Body of pancreas (tissue), 4 donors: ENCODE measurements at regions of chr17 and their contacts with region 1.

Region 1: GRCh38 chr17:43483674-43484372 is at the start of gene DHX8:
- DNase-seq: peak; percentile 97 to 99 (median 98)
- ATAC-seq: peak; percentile 100
- H3K4me3 ChIP-seq: peak within 1 kb of the TSS; percentile 38 to 58
- H3K27ac ChIP-seq: peak within 1 kb of the TSS; percentile 35 to 83 (median 67)
- H3K4me1 ChIP-seq: peaks cover 22% of the 10 kb centered on the region
- H3K27me3 ChIP-seq: no peaks in the 10 kb centered on the region
- CTCF ChIP-seq: peak; percentile 100
- POLR2A ChIP-seq: peak; percentile 39 to 92 (median 88)
- total RNA-seq, gene DHX8: 12.2 to 19.4 TPM

Region 2: GRCh38 chr17:43309505-43310332 is 174.1 kb before region 1 on chr17:
- intact Hi-C with region 1: no loop called
- DNase-seq: no peak
- ATAC-seq: no peak
- H3K4me3 ChIP-seq: no peak overlapping the region
- H3K27ac ChIP-seq: no peak overlapping the region
- H3K4me1 ChIP-seq: no peaks in the 10 kb centered on the region
- H3K27me3 ChIP-seq: no peaks in the 10 kb centered on the region
- CTCF ChIP-seq: no peak
- POLR2A ChIP-seq: no peak

Region 3: GRCh38 chr17:43442711-43443110 is 41.1 kb before region 1 on chr17:
- intact Hi-C with region 1: no loop called
- DNase-seq: no peak
- ATAC-seq: no peak
- H3K4me3 ChIP-seq: no peak overlapping the region
- H3K27ac ChIP-seq: no peak overlapping the region
- H3K4me1 ChIP-seq: peaks cover 7% of the 10 kb centered on the region
- H3K27me3 ChIP-seq: no peaks in the 10 kb centered on the region
- CTCF ChIP-seq: no peak
- POLR2A ChIP-seq: no peak

Region 4: GRCh38 chr17:43546319-43547188 is 62.7 kb after region 1 on chr17 and contains the start of gene ETV4:
- intact Hi-C with region 1: loop called (anchors 10 kb)
- DNase-seq: peak; percentile 87 to 93 (median 90)
- ATAC-seq: peak; percentile 83
- H3K4me3 ChIP-seq: peak within 1 kb of the TSS; percentile 6 to 26
- H3K27ac ChIP-seq: peak within 1 kb of the TSS; percentile 55 to 88 (median 84)
- H3K4me1 ChIP-seq: peaks cover 21% of the 10 kb centered on the region
- H3K27me3 ChIP-seq: no peaks in the 10 kb centered on the region
- CTCF ChIP-seq: no peak
- POLR2A ChIP-seq: peak in 1 of 3 donors; percentile 49
- total RNA-seq, gene ETV4: 6.2 to 28.7 TPM